A549 (cell line): ENCODE measurements at regions of chr7 and their contacts with region 1.

Region 1: DNA sequence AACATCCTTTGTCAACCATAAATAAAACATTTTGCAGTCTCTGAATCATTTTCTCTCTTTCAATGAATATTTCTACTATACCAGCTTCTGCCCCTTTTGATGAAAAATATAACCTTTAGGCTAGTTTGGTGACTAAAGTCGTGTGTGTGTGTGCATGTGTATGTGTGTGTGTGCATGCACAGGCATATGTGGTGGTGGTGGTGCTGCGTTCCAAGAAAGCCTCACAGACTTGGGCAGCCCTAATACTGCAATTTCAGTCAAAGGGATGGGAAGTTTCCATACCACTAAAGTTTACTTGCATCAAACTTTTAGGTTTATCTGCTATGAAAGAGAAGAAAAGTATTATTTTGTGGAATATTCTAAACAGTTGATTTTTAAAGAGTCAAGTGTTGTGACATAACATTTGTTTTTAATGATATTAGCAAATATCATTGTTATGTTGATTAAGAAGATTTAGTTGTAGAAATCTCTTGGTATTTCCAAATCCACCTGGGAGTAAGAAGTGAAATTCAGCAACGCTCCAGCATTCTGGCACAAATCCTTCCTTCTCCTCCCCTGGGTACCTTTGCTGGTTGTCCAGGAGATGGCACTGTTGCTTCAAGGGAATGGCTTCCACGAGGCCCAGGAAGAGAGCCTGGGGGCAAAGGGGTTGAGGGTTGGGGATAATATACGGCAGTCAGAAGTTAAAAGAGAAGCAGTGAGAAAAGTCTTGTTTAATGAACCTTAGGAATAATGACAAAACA is 41.5 kb downstream of the ASB4 start:
- DNase-seq: peak; percentile 73 to 75
- ATAC-seq: peak; percentile 90 to 95
- H3K4me3 ChIP-seq: no peak overlapping the region
- H3K27ac ChIP-seq: peak overlapping the region; percentile 49 to 72
- H3K4me1 ChIP-seq: peaks cover 21% of the 10 kb centered on the region
- CTCF ChIP-seq: peak; percentile 94
- EP300 ChIP-seq: no peak
- POLR2A ChIP-seq: no peak
- RAD21 ChIP-seq: peak; percentile 97 to 98

Region 2: DNA sequence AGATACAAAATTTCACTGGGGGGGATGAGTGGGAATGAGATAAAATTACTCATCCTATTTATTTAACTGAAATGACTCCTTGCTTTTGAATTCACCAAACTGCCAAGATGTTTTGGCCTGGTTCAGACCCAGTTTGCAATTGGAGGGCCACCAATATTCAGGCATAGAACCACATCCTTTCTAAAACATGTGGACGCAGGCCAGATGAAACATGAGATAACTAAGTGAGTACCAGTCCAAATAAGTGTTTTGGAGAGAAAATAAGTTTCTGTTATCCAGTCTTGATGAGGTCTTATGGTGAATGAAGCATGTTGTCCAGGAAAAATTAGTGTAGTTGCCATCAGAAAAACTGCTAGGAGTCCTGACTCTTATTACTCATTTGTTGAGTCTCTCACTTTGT is 105.4 kb after region 1 on chr7:
- CTCF ChIA-PET with region 1: no interaction called
- POLR2A ChIA-PET with region 1: no interaction called
- DNase-seq: no peak
- ATAC-seq: no peak
- H3K4me3 ChIP-seq: no peak overlapping the region
- H3K27ac ChIP-seq: no peak overlapping the region
- H3K4me1 ChIP-seq: peaks cover 11% of the 10 kb centered on the region
- CTCF ChIP-seq: no peak
- EP300 ChIP-seq: no peak
- POLR2A ChIP-seq: no peak
- RAD21 ChIP-seq: no peak

Region 3: DNA sequence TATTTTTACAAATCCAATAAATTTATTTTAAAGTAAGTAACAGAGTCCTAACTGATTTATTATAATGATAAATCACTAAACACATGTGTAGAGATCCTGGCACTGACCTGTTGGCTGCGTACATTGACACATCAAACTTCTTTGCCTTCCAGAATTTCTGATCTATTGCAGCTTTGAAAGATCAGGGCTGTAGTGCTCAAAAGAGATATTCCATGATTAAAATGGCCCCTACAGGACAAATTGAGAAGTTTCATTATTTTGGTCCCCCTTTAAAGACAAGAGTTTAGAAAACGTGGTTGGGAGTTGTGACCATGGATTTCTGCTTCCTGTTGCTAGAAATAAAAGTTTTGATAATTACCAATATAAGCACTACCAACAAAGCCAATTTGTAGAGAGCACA is 156.8 kb after region 1 on chr7:
- CTCF ChIA-PET with region 1: interaction called, 403 read pairs
- POLR2A ChIA-PET with region 1: no interaction called
- DNase-seq: peak; percentile 18 to 31
- ATAC-seq: peak in 1 of 2 experiments; percentile 56; a peak in 3 of 6 replicates
- H3K4me3 ChIP-seq: no peak overlapping the region
- H3K27ac ChIP-seq: peak overlapping the region; percentile 47 to 58; a peak in 5 of 6 replicates
- H3K4me1 ChIP-seq: peaks cover 13% of the 10 kb centered on the region; the same call in 2 of the 3 replicates
- CTCF ChIP-seq: peak; percentile 32; the same call in 1 of the 3 replicates
- EP300 ChIP-seq: no peak
- POLR2A ChIP-seq: no peak
- RAD21 ChIP-seq: peak; percentile 37 to 42; a peak in 3 of 5 replicates